ENCODE measurements at regions of chr10 and their contacts with region 1.

Region 1: DNA sequence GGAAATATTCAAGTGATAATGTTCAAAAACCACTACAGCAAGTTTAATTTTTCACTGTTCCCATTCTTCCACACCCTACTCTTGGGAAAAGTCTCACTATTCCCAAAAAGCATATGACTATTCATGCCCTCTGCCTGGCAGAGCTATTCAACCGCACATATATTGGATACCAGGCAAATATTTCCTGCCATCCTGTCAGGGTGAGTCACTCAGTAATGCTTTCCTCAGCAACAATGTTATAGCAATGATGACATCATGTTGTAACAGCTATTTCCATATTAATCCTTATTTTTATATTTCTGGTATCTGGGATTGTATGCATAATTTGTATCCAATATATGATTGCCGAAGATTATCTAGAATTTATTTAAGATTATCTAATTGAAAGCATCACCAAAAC is 114.0 kb upstream of the PLXDC2 start:
- DNase-seq: peak; percentile 23
- ATAC-seq: no peak
- H3K4me3 ChIP-seq: no peak overlapping the region
- H3K27ac ChIP-seq: no peak overlapping the region
- H3K4me1 ChIP-seq: no peaks in the 10 kb centered on the region
- H3K27me3 ChIP-seq: no peaks in the 10 kb centered on the region
- CTCF ChIP-seq: no peak

Region 2: GRCh38 chr10:19212590-19212989 is 489.6 kb before region 1 on chr10:
- CTCF ChIA-PET with region 1: interaction called, 11 read pairs
- POLR2A ChIA-PET with region 1: no interaction called
- intact Hi-C with region 1: no loop called
- DNase-seq: no peak
- ATAC-seq: no peak
- H3K4me3 ChIP-seq: no peak overlapping the region
- H3K27ac ChIP-seq: no peak overlapping the region
- H3K4me1 ChIP-seq: no peaks in the 10 kb centered on the region; the same call in 1 of the 2 replicates
- H3K27me3 ChIP-seq: no peaks in the 10 kb centered on the region
- CTCF ChIP-seq: no peak

Region 3: DNA sequence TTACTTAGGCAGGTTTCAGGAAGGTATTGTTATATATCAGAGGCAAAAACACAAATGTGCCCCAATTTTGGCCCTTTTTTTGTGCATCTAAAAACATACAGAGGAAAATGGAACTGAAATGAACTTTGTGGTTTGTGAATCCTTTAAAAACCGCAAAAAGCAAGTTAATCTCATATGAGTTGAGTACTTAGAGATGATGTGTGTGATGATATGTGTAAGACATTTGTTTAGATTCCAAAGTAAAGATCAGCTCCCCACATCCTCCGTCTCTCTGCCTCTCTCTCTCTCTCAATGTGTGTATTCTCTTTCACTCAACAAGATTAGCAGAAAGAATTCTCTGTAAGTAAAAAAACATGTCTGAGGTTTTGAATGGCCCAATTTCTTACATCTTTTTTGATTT is 451.7 kb before region 1 on chr10:
- CTCF ChIA-PET with region 1: no interaction called
- POLR2A ChIA-PET with region 1: no interaction called
- intact Hi-C with region 1: no loop called
- DNase-seq: peak; percentile 20
- ATAC-seq: no peak
- H3K4me3 ChIP-seq: no peak overlapping the region
- H3K27ac ChIP-seq: no peak overlapping the region
- H3K4me1 ChIP-seq: no peaks in the 10 kb centered on the region
- H3K27me3 ChIP-seq: no peaks in the 10 kb centered on the region
- CTCF ChIP-seq: no peak

Region 4: GRCh38 chr10:19592276-19592675 is 109.9 kb before region 1 on chr10:
- CTCF ChIA-PET with region 1: no interaction called
- POLR2A ChIA-PET with region 1: no interaction called
- intact Hi-C with region 1: no loop called
- DNase-seq: peak; percentile 81
- ATAC-seq: peak; percentile 33; the same call in 1 of the 2 replicates
- H3K4me3 ChIP-seq: no peak overlapping the region
- H3K27ac ChIP-seq: no peak overlapping the region
- H3K4me1 ChIP-seq: no peaks in the 10 kb centered on the region
- H3K27me3 ChIP-seq: no peaks in the 10 kb centered on the region
- CTCF ChIP-seq: no peak

Region 5: DNA sequence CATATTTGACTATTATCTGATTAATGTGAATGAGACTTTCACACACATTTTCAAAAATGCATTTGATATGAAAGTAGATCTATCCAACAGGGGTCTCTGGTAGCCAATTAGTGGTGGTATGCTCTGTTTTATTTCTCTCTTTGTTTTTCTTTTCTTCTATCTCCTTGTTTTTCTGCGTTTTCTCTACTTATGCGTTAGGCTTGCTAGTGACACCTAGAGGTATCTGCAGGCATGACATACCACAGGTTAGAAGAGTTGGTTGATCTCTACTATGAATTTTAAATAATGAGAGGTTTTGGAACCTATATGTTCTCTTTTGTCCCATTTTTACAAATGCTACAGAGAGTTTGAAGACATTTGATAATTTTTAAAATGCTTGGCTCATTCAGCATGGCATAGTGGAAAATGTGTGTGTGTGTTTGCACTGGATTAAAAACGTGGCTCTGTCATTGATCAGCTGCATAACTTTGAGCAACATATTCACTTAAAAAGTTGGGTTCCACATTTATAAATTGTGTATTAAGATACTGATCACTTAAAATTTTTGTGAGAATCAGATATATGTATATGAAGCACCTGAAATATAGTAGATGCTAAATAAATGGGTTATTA is 86.0 kb after region 1 on chr10:
- CTCF ChIA-PET with region 1: no interaction called
- POLR2A ChIA-PET with region 1: no interaction called
- intact Hi-C with region 1: no loop called
- DNase-seq: peak; percentile 55
- ATAC-seq: no peak
- H3K4me3 ChIP-seq: no peak overlapping the region
- H3K27ac ChIP-seq: no peak overlapping the region
- H3K4me1 ChIP-seq: no peaks in the 10 kb centered on the region
- H3K27me3 ChIP-seq: no peaks in the 10 kb centered on the region
- CTCF ChIP-seq: peak; percentile 81